Activated B cell treated with CpG ODN at 0.5 μM for 24 hours (primary cell): ENCODE measurements at regions of chr3 and their contacts with region 1.

Region 1: GRCh38 chr3:112498914-112499711 is at the start of gene BTLA:
- DNase-seq: no peak
- ATAC-seq: peak; percentile 68
- H3K4me3 Mint-ChIP-seq: peak within 1 kb of the TSS; percentile 92
- H3K27ac Mint-ChIP-seq: peak within 1 kb of the TSS; percentile 99
- H3K4me1 Mint-ChIP-seq: peaks cover 82% of the 10 kb centered on the region
- H3K27me3 Mint-ChIP-seq: no peaks in the 10 kb centered on the region
- CTCF ChIP-seq: no peak
- total RNA-seq, gene BTLA: 49.8 and 53.2 TPM in 2 replicates

Region 2: GRCh38 chr3:112117841-112118571 is 381.1 kb before region 1 on chr3:
- CTCF ChIA-PET with region 1: no interaction called
- POLR2A ChIA-PET with region 1: interaction called, 17 read pairs
- intact Hi-C with region 1: no loop called
- DNase-seq: no peak
- ATAC-seq: peak; percentile 64
- H3K4me3 Mint-ChIP-seq: peak overlapping the region; percentile 15
- H3K27ac Mint-ChIP-seq: peak overlapping the region; percentile 87
- H3K4me1 Mint-ChIP-seq: peaks cover 99% of the 10 kb centered on the region
- H3K27me3 Mint-ChIP-seq: no peaks in the 10 kb centered on the region
- CTCF ChIP-seq: no peak

Region 3: DNA sequence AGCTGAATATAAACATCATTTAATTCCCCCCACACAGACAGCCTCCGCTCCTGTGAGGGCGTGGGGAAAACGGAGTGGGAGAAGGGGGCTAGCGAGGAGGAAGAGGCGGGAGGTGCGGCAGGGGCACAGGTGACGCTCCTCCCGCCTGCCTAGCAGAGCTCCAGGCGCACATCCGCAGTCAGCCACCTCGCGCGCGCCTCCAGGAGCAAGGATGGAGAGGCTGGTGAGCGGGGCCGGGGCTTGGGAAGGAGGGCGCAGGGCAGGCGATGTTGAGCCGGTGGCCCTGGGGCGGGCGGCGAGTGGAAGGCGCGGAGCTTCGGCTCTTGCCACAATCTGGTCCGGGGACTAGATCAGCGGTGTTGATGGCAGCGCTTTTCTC is 166.1 kb before region 1 on chr3 and contains the start of gene CD200:
- CTCF ChIA-PET with region 1: interaction called, 4 read pairs
- POLR2A ChIA-PET with region 1: interaction called, 137 read pairs
- intact Hi-C with region 1: no loop called
- DNase-seq: peak; percentile 45
- ATAC-seq: peak; percentile 77
- H3K4me3 Mint-ChIP-seq: peak within 1 kb of the TSS; percentile 94
- H3K27ac Mint-ChIP-seq: peak within 1 kb of the TSS; percentile 94
- H3K4me1 Mint-ChIP-seq: peaks cover 59% of the 10 kb centered on the region
- H3K27me3 Mint-ChIP-seq: no peaks in the 10 kb centered on the region
- CTCF ChIP-seq: no peak
- total RNA-seq, gene CD200: 19.0 and 19.4 TPM in 2 replicates

Region 4: GRCh38 chr3:112464264-112464663 is 34.8 kb before region 1 on chr3:
- CTCF ChIA-PET with region 1: interaction called, 6 read pairs
- POLR2A ChIA-PET with region 1: interaction called, 12 read pairs
- intact Hi-C with region 1: loop called (anchors 2 kb)
- DNase-seq: no peak
- ATAC-seq: peak; percentile 50
- H3K4me3 Mint-ChIP-seq: peak overlapping the region; percentile 68
- H3K27ac Mint-ChIP-seq: peak overlapping the region; percentile 65
- H3K4me1 Mint-ChIP-seq: peaks cover 91% of the 10 kb centered on the region
- H3K27me3 Mint-ChIP-seq: no peaks in the 10 kb centered on the region
- CTCF ChIP-seq: no peak

Region 5: DNA sequence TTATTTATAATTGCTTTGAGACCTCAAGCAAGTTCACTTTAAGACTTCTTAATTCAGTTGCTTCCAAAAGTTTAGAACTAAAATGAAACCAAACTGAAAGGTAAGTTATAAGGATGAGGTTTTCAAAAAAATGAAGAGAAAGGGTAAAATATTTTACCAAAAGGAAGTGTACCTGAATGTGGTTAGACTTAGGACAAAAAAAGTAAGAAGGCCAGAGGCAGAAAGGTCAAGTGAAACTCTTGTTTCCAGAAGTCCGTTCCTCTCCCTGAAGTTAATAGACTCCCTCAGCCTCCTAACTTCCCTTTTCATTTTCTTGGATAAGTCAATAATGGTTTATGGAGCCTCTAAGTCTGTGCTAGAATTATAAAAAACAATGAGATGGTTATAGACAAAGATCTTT is 16.4 kb before region 1 on chr3:
- CTCF ChIA-PET with region 1: interaction called, 4 read pairs
- POLR2A ChIA-PET with region 1: interaction called, 27 read pairs
- intact Hi-C with region 1: loop called (anchors 2 kb)
- DNase-seq: no peak
- ATAC-seq: peak; percentile 18
- H3K4me3 Mint-ChIP-seq: peak overlapping the region; percentile 54
- H3K27ac Mint-ChIP-seq: peak overlapping the region; percentile 90
- H3K4me1 Mint-ChIP-seq: peaks cover 77% of the 10 kb centered on the region
- H3K27me3 Mint-ChIP-seq: no peaks in the 10 kb centered on the region
- CTCF ChIP-seq: no peak

Region 6: GRCh38 chr3:112519424-112520001 is 20.4 kb after region 1 on chr3:
- CTCF ChIA-PET with region 1: interaction called, 11 read pairs
- POLR2A ChIA-PET with region 1: interaction called, 53 read pairs
- intact Hi-C with region 1: loop called (anchors 1 kb)
- DNase-seq: no peak
- ATAC-seq: peak; percentile 75
- H3K4me3 Mint-ChIP-seq: peak overlapping the region; percentile 58
- H3K27ac Mint-ChIP-seq: peak overlapping the region; percentile 89
- H3K4me1 Mint-ChIP-seq: peaks cover 41% of the 10 kb centered on the region
- H3K27me3 Mint-ChIP-seq: no peaks in the 10 kb centered on the region
- CTCF ChIP-seq: no peak